ENCODE measurements at regions of chr3 and their contacts with region 1.

Region 1: DNA sequence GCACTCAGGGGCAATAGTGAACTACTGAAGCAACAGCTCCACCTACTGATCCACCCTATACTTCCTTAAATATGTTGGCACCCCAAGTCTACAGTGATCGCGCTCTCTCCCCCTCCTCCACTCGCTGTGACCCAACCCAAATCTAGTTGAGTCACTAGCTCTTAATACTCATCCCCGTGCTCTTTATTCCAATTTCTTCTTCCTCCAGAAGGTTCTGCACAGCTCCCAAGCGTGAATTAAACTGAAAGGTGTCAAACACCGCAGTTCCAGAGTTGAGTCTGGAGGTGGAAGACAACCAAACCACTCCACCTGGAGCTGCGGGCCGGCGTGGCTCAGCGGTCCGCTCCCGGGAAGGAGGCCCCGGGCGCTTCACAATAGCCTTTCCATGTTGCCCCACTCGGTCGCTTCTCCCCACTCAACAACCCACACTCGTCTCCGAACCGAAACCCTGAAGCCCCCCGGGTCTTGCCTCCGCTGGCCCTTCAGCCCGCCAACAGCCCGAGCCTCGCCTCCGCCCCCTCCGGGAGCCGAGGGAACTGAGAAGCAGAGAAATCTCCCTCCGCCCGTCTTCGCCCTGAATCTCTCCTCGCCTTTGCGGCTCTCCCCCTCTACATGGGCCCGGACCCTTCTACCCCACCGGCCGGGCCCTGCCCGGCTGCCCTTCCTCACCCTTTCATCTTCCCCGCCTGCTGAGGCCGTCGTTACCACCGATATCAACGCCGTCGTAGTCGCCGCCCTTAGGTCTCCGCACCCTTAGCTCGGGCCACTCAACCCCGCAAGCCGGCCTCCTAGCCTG is 578 bp downstream of the NAA50 start:
- DNase-seq: peak; percentile 90
- ATAC-seq: peak; percentile 72
- H3K4me3 Mint-ChIP-seq: peak overlapping the region; percentile 98
- H3K27ac Mint-ChIP-seq: peak overlapping the region; percentile 100
- H3K4me1 Mint-ChIP-seq: peaks cover 63% of the 10 kb centered on the region
- H3K27me3 Mint-ChIP-seq: no peaks in the 10 kb centered on the region
- CTCF ChIP-seq: peak; percentile 52

Region 2: GRCh38 chr3:113696658-113697499 is 48.6 kb before region 1 on chr3:
- CTCF ChIA-PET with region 1: interaction called, 9 read pairs
- POLR2A ChIA-PET with region 1: interaction called, 14 read pairs
- intact Hi-C with region 1: no loop called
- DNase-seq: peak; percentile 100
- ATAC-seq: peak; percentile 92
- H3K4me3 Mint-ChIP-seq: no peak overlapping the region
- H3K27ac Mint-ChIP-seq: no peak overlapping the region
- H3K4me1 Mint-ChIP-seq: peaks cover 25% of the 10 kb centered on the region
- H3K27me3 Mint-ChIP-seq: no peaks in the 10 kb centered on the region
- CTCF ChIP-seq: no peak

Region 3: DNA sequence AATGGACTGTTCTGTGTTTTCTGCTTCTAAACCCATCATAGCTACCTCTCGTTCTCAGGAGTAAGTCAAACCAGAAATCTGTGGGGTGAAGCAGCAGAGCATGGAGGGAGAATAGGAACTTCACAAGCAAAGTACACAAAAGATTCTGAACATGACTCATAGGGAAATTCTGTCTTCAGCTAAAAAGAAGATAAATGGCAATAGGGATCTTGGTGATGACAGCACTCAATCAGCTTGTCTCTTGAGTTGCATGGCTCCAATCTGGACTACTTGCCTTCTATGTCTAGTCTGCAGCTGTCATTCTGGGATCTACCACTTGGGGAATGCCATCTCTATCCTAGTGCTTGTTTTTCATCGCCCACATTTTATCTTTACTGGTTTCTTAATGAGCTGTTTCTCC is 79.6 kb after region 1 on chr3:
- CTCF ChIA-PET with region 1: no interaction called
- POLR2A ChIA-PET with region 1: no interaction called
- intact Hi-C with region 1: no loop called
- DNase-seq: no peak
- ATAC-seq: no peak
- H3K4me3 Mint-ChIP-seq: no peak overlapping the region
- H3K27ac Mint-ChIP-seq: no peak overlapping the region
- H3K4me1 Mint-ChIP-seq: no peaks in the 10 kb centered on the region
- H3K27me3 Mint-ChIP-seq: no peaks in the 10 kb centered on the region
- CTCF ChIP-seq: no peak

Region 4: GRCh38 chr3:114056130-114057010 is 310.9 kb after region 1 on chr3 and contains the starts of genes CCDC191 and QTRT2:
- CTCF ChIA-PET with region 1: interaction called, 4 read pairs
- POLR2A ChIA-PET with region 1: no interaction called
- intact Hi-C with region 1: loop called (anchors 5 kb)
- DNase-seq: peak; percentile 99
- ATAC-seq: peak; percentile 96
- H3K4me3 Mint-ChIP-seq: peak within 1 kb of the TSS; percentile 87
- H3K27ac Mint-ChIP-seq: peak within 1 kb of the TSS; percentile 95
- H3K4me1 Mint-ChIP-seq: peaks cover 31% of the 10 kb centered on the region
- H3K27me3 Mint-ChIP-seq: no peaks in the 10 kb centered on the region
- CTCF ChIP-seq: no peak
- total RNA-seq, gene CCDC191: 1.5 to 1.7 TPM
- total RNA-seq, gene QTRT2: 31.6 to 36.8 TPM